MCF 10A (cell line): ENCODE measurements at regions of chr12 and their contacts with region 1.

Region 1: DNA sequence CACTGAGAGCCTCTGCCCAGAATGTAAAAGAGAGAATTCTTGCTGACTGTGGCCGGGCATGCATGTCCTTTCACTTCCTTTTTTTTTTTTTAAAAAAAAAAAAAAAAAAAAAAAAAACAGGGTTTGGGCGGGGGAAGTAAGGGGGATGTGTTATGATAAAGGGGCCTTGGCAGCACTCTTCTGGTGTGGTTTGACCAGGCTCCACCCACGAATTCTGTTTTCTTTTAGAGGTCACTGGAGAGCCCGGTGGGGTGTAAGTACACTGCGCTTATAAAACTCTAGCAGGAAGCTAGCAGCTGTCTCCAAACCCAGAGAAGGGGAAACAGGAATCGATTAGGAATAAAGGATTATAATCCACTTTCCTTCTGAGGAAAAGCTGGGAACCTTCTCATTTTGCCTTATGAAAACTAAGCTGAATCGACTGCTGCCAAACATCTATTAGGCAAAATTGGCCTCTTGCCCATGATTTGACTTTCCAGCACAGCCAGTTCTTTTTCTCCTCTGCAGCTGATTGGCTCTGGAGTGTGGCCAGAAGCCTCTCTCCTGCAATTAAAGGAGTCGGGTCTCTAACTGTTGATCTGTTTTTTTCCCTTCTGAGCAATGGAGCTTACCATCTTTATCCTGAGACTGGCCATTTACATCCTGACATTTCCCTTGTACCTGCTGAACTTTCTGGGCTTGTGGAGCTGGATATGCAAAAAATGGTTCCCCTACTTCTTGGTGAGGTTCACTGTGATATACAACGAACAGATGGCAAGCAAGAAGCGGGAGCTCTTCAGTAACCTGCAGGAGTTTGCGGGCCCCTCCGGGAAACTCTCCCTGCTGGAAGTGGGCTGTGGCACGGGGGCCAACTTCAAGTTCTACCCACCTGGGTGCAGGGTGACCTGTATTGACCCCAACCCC is 27.7 kb upstream of the HIGD1C start:
- DNase-seq: peak; percentile 97
- H3K4me3 Mint-ChIP-seq: peak overlapping the region; percentile 96
- H3K27ac Mint-ChIP-seq: peak overlapping the region; percentile 93
- H3K4me1 Mint-ChIP-seq: peaks cover 33% of the 10 kb centered on the region
- H3K27me3 Mint-ChIP-seq: no peaks in the 10 kb centered on the region
- CTCF ChIP-seq: no peak

Region 2: DNA sequence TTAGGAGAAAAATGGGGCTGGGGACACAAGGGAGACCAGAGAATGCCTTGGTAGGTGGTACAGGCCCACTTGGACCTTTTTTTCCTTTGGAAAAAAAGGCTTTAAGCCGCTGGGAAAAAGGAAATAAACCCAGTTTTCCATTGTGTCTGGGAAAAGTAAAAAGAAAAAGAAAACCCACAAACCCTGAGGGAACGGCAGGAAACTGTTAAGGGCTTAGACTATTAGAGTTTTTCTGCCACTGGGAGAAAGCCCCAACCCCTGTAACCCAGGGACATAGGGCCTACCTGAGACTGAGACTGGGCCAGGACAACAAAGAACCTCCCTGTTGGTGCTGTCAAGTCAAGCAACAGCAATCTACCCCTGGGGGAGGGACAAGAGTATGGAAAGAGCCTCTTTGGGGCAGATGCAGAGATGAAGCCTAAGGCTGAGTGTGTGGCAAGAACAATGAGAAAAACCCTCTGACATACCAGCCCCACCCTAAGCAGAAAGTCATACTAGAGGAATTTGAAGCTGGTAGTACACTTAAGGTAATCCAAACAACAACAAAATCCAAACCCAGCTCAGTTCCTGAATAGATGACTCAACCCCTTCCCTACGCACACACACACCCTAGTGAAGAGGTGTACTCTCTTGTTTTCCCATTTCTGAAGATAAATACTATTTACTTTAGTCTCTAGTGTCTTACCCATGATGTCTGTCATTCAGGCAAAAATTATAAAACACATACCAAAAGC is 138.0 kb before region 1 on chr12:
- CTCF ChIA-PET with region 1: no interaction called
- POLR2A ChIA-PET with region 1: interaction called, 11 read pairs
- intact Hi-C with region 1: no loop called
- DNase-seq: peak; percentile 98
- H3K4me3 Mint-ChIP-seq: peak overlapping the region; percentile 9
- H3K27ac Mint-ChIP-seq: peak overlapping the region; percentile 96
- H3K4me1 Mint-ChIP-seq: peaks cover 63% of the 10 kb centered on the region
- H3K27me3 Mint-ChIP-seq: no peaks in the 10 kb centered on the region
- CTCF ChIP-seq: no peak

Region 3: DNA sequence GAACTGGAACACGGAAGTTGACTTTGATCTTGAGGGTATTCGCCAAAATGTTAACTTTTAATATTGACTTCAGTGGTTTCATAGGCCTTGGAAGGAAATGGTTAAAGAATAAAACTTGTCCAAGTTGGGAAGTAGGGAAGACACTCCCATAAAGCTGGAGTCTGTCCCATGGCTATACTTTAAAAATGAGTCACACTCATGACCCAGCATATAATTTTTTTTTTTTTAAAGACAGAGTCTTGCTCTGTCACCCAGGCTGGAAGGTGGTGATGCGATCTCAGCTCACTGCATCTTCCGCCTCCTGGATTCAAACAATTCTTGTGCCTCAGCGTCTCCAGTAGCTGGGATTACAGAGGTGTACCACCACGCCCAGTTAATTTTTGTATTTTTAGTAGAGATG is 62.4 kb before region 1 on chr12:
- CTCF ChIA-PET with region 1: interaction called, 4 read pairs
- POLR2A ChIA-PET with region 1: interaction called, 31 read pairs
- intact Hi-C with region 1: no loop called
- DNase-seq: peak; percentile 71
- H3K4me3 Mint-ChIP-seq: peak overlapping the region; percentile 43
- H3K27ac Mint-ChIP-seq: peak overlapping the region; percentile 66
- H3K4me1 Mint-ChIP-seq: peaks cover 14% of the 10 kb centered on the region
- H3K27me3 Mint-ChIP-seq: no peaks in the 10 kb centered on the region
- CTCF ChIP-seq: no peak

Region 4: GRCh38 chr12:50986966-50987737 is 62.5 kb after region 1 on chr12:
- CTCF ChIA-PET with region 1: interaction called, 18 read pairs
- POLR2A ChIA-PET with region 1: interaction called, 47 read pairs
- intact Hi-C with region 1: no loop called
- DNase-seq: peak; percentile 67
- H3K4me3 Mint-ChIP-seq: no peak overlapping the region
- H3K27ac Mint-ChIP-seq: no peak overlapping the region
- H3K4me1 Mint-ChIP-seq: peaks cover 6% of the 10 kb centered on the region
- H3K27me3 Mint-ChIP-seq: no peaks in the 10 kb centered on the region
- CTCF ChIP-seq: peak; percentile 38